ENCODE measurements at regions of chr3 and their contacts with region 1.

Region 1: GRCh38 chr3:171915275-171915674 is 72.1 kb downstream of the TMEM212 start:
- DNase-seq: no peak
- ATAC-seq: no peak
- H3K4me3 ChIP-seq: no peak overlapping the region
- H3K4me3 Mint-ChIP-seq: no peak overlapping the region
- H3K27ac ChIP-seq: no peak overlapping the region
- H3K27ac Mint-ChIP-seq: no peak overlapping the region
- H3K4me1 ChIP-seq: no peaks in the 10 kb centered on the region
- H3K4me1 Mint-ChIP-seq: no peaks in the 10 kb centered on the region
- H3K27me3 ChIP-seq: no peaks in the 10 kb centered on the region
- H3K27me3 Mint-ChIP-seq: peaks cover 15% of the 10 kb centered on the region
- CTCF ChIP-seq: no peak

Region 2: DNA sequence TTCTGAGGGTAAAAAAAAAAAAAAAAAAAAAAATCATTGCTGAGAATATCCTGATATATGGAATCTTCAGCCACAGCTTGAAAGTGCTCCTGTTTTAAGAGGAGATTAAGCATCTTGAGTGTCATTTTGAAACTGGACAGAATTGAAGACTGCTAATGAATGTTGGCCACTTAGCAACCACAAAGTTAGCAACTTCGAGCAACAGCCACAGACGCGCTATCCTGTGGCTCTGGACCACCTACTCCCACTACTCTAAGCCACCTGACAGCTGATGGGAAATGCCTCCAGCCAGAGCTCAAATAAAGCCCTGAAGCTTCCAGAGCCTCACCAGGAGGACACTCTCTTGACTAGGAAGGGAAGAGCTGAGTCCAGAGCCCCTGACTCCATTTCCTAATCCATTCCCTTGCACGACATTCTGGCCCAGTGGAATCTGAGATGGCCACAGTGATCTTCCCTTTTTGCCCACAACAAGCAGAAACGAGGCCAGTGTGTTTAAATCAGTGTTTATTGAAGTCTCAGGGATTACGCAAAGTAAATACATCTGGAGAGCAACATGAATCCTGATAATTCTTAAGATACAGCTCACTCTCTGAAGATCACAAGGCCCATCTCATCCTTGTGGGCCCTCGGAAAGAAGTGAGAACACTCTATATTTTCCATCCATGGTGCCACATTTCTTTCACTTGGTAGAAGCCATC is 13.5 kb before region 1 on chr3:
- CTCF ChIA-PET with region 1: no interaction called
- POLR2A ChIA-PET with region 1: interaction called, 4 read pairs
- intact Hi-C with region 1: loop called in 1 of 2 experiments (anchors 1 kb)
- DNase-seq: no peak
- ATAC-seq: no peak
- H3K4me3 ChIP-seq: no peak overlapping the region
- H3K4me3 Mint-ChIP-seq: no peak overlapping the region
- H3K27ac ChIP-seq: no peak overlapping the region
- H3K27ac Mint-ChIP-seq: no peak overlapping the region
- H3K4me1 ChIP-seq: no peaks in the 10 kb centered on the region
- H3K4me1 Mint-ChIP-seq: no peaks in the 10 kb centered on the region
- H3K27me3 ChIP-seq: no peaks in the 10 kb centered on the region
- H3K27me3 Mint-ChIP-seq: peaks cover 7% of the 10 kb centered on the region
- CTCF ChIP-seq: no peak

Measured in CD8-positive, alpha-beta T cell (primary cell).